ENCODE measurements at regions of chr22 and their contacts with region 1.

Region 1: GRCh38 chr22:20558567-20559205 is 51.3 kb downstream of the MED15 start:
- DNase-seq: no peak
- H3K4me3 Mint-ChIP-seq: no peak overlapping the region
- H3K27ac Mint-ChIP-seq: peak overlapping the region; percentile 100
- H3K4me1 Mint-ChIP-seq: peaks cover 83% of the 10 kb centered on the region
- H3K27me3 Mint-ChIP-seq: no peaks in the 10 kb centered on the region

Region 2: DNA sequence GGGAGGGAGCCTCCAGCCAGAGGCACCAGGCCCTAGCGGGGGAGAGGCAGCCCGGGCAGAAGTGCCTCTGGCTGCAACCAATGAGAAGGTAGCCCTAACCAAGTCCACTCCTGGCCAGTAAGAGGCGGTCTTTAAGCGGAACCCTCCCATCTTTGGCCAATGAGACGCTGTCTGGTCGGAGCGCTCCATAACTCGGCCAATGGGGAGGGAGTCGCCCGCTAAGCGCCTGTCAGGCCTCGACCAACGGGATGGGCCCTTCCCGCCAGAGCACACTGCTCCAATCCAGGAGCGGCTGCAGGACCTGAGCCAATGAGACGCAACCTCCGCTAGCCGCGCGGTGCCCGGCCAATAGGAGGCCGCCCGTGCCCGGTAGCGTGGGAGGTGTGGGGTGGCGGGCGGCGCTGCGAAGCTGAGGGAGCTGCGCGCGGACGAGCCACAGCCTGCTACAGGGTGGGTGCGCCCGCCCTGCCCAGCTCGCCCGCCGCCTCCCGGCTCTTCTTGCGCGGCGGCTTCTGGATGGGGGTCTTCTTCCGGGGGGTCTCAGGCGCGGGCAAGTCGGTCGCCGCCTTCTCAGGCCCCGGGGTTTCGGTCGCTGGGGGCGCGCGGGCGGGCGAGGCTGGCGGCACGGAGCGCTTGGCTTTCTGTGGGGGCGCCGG is 133.6 kb before region 1 on chr22:
- CTCF ChIA-PET with region 1: no interaction called
- POLR2A ChIA-PET with region 1: no interaction called
- DNase-seq: no peak
- H3K4me3 Mint-ChIP-seq: peak overlapping the region; percentile 21
- H3K27ac Mint-ChIP-seq: no peak overlapping the region
- H3K4me1 Mint-ChIP-seq: peaks cover 10% of the 10 kb centered on the region
- H3K27me3 Mint-ChIP-seq: peaks cover 37% of the 10 kb centered on the region

Region 3: DNA sequence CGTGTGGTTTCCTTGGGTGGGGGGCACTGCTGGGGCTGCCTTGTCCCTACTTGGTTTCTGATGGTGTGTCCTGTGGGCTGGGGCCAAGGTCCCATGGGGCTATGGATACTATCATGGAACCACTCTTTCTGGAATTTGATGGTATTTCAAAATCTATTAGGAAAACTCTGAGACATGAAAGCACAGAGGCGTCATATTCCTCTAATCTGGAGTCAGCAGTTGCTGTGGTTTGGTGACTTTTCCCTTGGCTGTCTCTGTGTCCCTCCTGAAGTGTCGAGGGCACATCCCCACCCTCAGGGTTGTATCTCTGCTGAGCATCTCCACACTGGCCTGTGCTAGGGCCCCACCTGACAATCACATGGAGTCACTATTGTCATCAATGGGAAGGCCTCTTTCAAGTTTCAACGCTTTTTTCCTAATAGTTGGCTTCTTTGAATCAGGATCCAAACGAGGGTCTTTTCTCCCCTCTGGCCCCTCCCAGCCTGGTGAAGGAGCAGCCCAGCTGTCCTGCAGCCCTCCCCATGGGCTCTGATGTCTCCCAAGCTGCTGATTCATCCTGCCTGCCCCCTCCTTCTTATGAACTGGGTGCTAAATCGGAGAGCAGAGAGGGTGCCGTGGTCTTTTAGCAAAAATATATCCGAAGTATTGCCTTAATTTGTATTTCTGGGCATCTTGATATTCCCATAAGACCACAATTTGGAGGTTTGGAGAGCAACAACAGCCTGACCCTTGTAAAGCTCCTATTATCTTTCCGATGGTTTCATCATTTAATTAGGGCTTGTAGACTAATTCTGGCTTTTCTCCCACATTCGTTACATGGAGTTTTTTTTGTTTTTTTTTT is 12.8 kb before region 1 on chr22:
- CTCF ChIA-PET with region 1: interaction called, 313 read pairs
- POLR2A ChIA-PET with region 1: interaction called, 320 read pairs
- DNase-seq: no peak
- H3K4me3 Mint-ChIP-seq: no peak overlapping the region
- H3K27ac Mint-ChIP-seq: peak overlapping the region; percentile 40
- H3K4me1 Mint-ChIP-seq: peaks cover 69% of the 10 kb centered on the region
- H3K27me3 Mint-ChIP-seq: no peaks in the 10 kb centered on the region

Region 4: GRCh38 chr22:20777420-20778177 is 218.9 kb after region 1 on chr22:
- CTCF ChIA-PET with region 1: no interaction called
- POLR2A ChIA-PET with region 1: no interaction called
- DNase-seq: no peak
- H3K4me3 Mint-ChIP-seq: no peak overlapping the region
- H3K27ac Mint-ChIP-seq: no peak overlapping the region
- H3K4me1 Mint-ChIP-seq: peaks cover 21% of the 10 kb centered on the region
- H3K27me3 Mint-ChIP-seq: no peaks in the 10 kb centered on the region

Measured in activated CD4-positive, alpha-beta memory T cell treated with anti-CD3 and anti-CD28 coated beads, Interleukin-2, amount 10 ng/mL, durations not matched to agents 7 days and 5 days (primary cell).